ENCODE measurements at regions of chr5 and their contacts with region 1.

Region 1: GRCh38 chr5:80083101-80083890 is 48.1 kb downstream of the THBS4 start:
- DNase-seq: no peak
- H3K4me3 ChIP-seq: peak overlapping the region; percentile 27
- H3K27me3 ChIP-seq: no peaks in the 10 kb centered on the region
- CTCF ChIP-seq: peak; percentile 60

Region 2: DNA sequence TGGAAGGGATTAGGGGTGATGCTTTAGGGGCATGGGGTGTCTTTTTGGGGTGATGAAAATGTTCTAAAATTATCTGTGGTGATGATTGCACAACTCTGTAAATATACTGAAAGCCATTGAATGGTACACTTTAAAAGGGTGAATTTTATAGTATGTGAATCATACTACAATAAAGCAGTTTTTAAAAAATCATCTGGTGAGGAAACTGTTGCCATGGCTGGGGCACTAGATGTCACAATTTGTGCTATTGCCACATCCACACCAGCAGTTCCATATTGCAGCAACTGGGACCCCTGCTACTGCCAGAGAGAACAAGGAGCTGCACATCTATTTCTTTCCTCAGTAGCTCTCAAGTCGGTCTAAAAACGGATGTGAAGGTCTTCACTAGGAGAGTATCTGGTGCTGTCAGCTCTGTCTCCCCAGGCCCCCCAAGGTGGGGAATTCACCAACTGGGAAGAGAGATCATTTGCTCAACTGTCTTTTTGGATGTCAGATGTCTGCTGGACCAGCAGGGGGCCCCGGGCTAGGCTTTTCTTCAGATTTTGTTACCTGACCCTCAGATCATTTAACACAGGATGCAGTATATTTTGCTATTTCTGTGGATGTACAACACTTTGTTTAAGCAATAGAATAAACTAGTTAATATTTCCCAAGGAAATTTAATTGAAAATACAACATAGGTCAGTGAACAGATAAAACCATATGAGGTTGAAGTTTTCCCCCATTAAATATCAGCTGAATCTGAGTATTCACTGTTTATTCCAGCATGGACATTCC is 380.5 kb before region 1 on chr5:
- CTCF ChIA-PET with region 1: no interaction called
- POLR2A ChIA-PET with region 1: interaction called, 10 read pairs
- DNase-seq: peak; percentile 41
- H3K4me3 ChIP-seq: no peak overlapping the region
- H3K27me3 ChIP-seq: no peaks in the 10 kb centered on the region
- CTCF ChIP-seq: peak; percentile 51

Region 3: DNA sequence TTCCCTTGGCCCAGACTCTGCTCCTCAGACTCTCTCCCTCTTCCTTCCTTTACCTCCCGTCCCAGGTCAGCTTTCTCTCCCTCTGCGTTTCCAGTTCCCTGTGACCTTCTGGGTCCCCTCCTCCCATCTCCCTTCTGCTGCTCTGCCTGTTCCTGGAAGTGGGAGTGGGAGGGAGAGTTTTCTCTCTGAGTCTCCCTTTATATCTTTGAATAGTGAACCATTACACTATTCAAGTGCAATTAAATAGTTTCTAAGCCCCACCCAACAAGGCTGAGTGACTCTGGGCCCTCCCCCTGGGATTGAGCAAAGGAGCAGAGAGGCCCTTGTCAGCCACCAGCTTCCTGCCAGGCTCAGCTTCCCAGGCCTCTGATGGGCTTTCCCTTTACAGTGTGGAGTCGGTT is 13.4 kb before region 1 on chr5:
- CTCF ChIA-PET with region 1: interaction called, 16 read pairs
- POLR2A ChIA-PET with region 1: no interaction called
- DNase-seq: no peak
- H3K4me3 ChIP-seq: no peak overlapping the region
- H3K27me3 ChIP-seq: no peaks in the 10 kb centered on the region
- CTCF ChIP-seq: no peak